Left cardiac atrium (tissue), 4 donors: ENCODE measurements at regions of chr16 and their contacts with region 1.

Region 1: GRCh38 chr16:46801428-46802049 is 29.4 kb downstream of the C16orf87 start:
- DNase-seq: no peak
- ATAC-seq: peak in 1 of 2 donors; percentile 29

Region 2: DNA sequence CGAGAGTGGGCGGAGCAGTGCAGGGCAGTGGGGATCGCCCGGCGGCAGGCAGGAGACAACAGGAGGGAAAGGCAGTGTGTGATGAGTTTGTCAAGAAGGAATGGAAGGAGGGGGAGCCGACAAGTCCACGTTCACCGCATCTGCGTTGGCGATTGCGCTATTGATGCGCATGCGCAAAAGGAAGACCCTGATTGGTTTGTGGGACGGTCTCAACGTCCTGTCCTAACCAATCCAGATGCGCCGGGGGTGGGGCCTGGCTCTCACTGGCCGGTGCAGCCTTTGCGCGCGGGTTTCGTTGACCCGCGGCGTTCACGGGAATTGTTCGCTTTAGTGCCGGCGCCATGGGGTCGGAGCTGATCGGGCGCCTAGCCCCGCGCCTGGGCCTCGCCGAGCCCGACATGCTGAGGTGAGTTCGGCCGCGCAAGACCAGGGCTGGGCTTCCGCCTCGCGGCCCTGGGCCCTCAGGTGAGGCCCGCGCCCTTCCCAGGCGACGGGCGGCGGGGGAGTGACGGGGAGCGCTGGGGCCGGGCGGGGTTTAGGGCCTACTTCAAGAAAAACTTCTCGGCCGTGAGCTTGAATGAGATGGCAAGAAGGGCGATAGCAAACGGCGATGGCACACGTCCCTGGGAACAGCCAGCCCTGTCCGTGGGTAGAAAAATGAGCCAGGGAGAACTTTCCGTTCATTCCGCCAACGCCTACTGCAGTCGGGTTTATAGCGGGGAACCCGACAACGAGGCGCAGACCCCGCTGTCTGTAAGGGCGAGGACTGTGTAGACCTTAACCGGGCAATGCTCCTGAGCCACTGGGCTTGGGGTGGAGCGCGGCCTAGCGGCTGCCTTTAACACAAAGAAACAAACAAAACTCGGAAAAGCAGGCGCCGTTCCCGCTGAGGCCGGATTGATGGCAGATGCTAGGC is 111.9 kb before region 1 on chr16 and contains the start of gene ORC6:
- intact Hi-C with region 1: loop called (anchors 10 kb)
- DNase-seq: peak; percentile 99
- ATAC-seq: peak; percentile 91 to 95
- total RNA-seq, gene ORC6: 2.0 to 2.1 TPM

Region 3: DNA sequence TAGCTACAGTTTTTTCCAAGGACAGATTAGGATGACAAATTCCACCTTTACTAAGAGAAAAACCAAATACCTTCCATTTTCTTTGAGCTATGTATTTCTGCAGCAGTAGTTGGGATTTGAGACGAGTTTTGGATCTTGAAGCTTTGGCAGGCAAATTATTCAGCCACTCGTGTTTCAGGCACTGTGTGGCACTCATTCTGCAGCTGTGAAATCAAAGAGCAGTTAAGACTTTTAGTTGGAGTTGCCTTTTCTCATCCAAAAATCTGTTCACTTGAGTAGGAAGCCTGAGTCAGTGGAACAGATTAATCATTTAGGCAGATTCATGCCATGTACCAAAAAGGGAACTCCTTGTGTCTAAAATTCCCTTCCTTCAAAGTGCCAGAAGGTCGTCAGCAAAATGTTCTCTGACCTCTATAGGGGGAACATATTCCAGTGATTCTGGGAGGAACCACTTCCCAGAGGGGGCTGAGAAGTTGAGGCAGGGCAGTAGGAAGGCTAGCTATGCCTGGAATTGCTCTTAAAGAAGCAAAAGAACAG is 92.0 kb before region 1 on chr16:
- intact Hi-C with region 1: loop called in 1 of 2 experiments (anchors 10 kb)
- DNase-seq: no peak
- ATAC-seq: no peak

Region 4: GRCh38 chr16:46765050-46765449 is 36.5 kb before region 1 on chr16:
- intact Hi-C with region 1: no loop called
- DNase-seq: no peak
- ATAC-seq: no peak